GM18951 (cell line): ENCODE measurements at regions of chr1 and their contacts with region 1.

Region 1: GRCh38 chr1:223081181-223081994 is 61.7 kb downstream of the TLR5 start:
- POLR2A ChIP-seq: no peak

Region 2: GRCh38 chr1:222465211-222466041 is 616.0 kb before region 1 on chr1:
- in situ Hi-C with region 1: loop called (anchors 25 kb)
- POLR2A ChIP-seq: peak; percentile 46

Region 3: GRCh38 chr1:222792744-222793143 is 288.6 kb before region 1 on chr1:
- in situ Hi-C with region 1: loop called (anchors 25 kb)
- POLR2A ChIP-seq: no peak